Testis (tissue), 5 donors: ENCODE measurements at regions of chr10 and their contacts with region 1.

Region 1: DNA sequence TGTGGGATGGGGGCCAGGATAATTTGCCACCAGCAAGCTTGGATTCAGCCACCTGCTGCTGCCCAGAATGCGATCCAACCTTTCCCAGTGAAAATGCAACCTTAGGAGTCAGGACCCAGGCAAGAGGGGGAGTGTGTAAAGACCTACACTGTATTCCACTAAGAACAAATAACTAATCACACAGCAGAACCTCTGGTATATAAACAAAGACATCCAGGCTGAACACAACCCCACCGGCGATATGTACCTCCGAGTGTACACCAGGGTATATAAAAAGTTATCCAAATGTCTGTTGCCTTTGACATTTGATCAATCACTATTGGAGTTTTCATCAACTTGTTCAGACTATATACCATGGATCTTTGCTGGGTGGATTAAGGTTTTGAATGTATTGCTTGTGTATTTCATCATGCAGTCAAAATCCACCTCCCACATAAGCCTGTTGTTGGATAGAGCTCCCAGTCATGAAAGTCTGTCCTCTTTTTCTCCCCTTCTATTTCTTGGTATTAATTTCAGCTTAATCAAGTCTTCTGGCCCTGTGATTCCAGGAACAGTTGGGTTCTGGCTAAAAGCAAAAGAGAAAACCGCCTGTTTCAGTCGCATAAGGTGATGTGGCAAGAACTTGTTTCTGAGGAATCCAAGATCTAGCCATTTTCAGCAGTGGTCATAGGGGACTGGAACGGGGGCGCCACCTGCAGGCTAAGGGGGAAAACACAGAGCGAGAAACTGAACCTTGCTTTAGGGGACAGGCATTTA is 290.7 kb downstream of the CCDC3 start:
- DNase-seq: peak; percentile 83
- H3K4me3 ChIP-seq: no peak overlapping the region
- H3K27ac ChIP-seq: peak overlapping the region; percentile 69 to 83
- H3K4me1 ChIP-seq: peaks cover 50% of the 10 kb centered on the region
- H3K27me3 ChIP-seq: no peaks in the 10 kb centered on the region
- CTCF ChIP-seq: peak; percentile 78 to 94 (median 94)
- POLR2A ChIP-seq: no peak

Region 2: GRCh38 chr10:12264204-12264940 is 446.4 kb before region 1 on chr10:
- intact Hi-C with region 1: loop called (anchors 5 kb)
- DNase-seq: peak; percentile 88
- H3K4me3 ChIP-seq: peak overlapping the region; percentile 29 to 52
- H3K27ac ChIP-seq: peak overlapping the region; percentile 59 to 72
- H3K4me1 ChIP-seq: peaks cover 4% of the 10 kb centered on the region
- H3K27me3 ChIP-seq: no peaks in the 10 kb centered on the region
- CTCF ChIP-seq: peak; percentile 70 to 75 (median 75)
- POLR2A ChIP-seq: no peak

Region 3: GRCh38 chr10:13074561-13075451 is 364.0 kb after region 1 on chr10:
- intact Hi-C with region 1: loop called (anchors 10 kb)
- DNase-seq: peak; percentile 84
- H3K4me3 ChIP-seq: no peak overlapping the region
- H3K27ac ChIP-seq: no peak overlapping the region
- H3K4me1 ChIP-seq: no peaks in the 10 kb centered on the region
- H3K27me3 ChIP-seq: no peaks in the 10 kb centered on the region
- CTCF ChIP-seq: peak; percentile 67 to 80 (median 72)
- POLR2A ChIP-seq: no peak